Lower leg skin (tissue), 4 donors: ENCODE measurements at regions of chr18 and their contacts with region 1.

Region 1: GRCh38 chr18:8247700-8248099 is 361.5 kb upstream of the RAB12 start:
- DNase-seq: no peak
- H3K4me3 ChIP-seq: no peak overlapping the region
- CTCF ChIP-seq: no peak
- POLR2A ChIP-seq: no peak

Region 2: GRCh38 chr18:8229775-8230174 is 17.9 kb before region 1 on chr18:
- intact Hi-C with region 1: no loop called
- DNase-seq: no peak
- H3K4me3 ChIP-seq: no peak overlapping the region
- CTCF ChIP-seq: no peak
- POLR2A ChIP-seq: no peak

Region 3: GRCh38 chr18:8322486-8322885 is 74.8 kb after region 1 on chr18:
- intact Hi-C with region 1: loop called (anchors 2 kb)
- DNase-seq: no peak
- H3K4me3 ChIP-seq: no peak overlapping the region
- CTCF ChIP-seq: no peak
- POLR2A ChIP-seq: no peak